A549 (cell line): ENCODE measurements at regions of chr10 and their contacts with region 1.

Region 1: GRCh38 chr10:43304687-43305340 is 37.9 kb upstream of the RASGEF1A start:
- DNase-seq: peak; percentile 43 to 46
- ATAC-seq: peak; percentile 80
- H3K4me3 ChIP-seq: peak overlapping the region; percentile 39
- H3K27ac ChIP-seq: peak overlapping the region; percentile 63 to 86
- H3K4me1 ChIP-seq: peaks cover 19% of the 10 kb centered on the region
- CTCF ChIP-seq: no peak
- EP300 ChIP-seq: no peak
- POLR2A ChIP-seq: no peak
- RAD21 ChIP-seq: no peak

Region 2: DNA sequence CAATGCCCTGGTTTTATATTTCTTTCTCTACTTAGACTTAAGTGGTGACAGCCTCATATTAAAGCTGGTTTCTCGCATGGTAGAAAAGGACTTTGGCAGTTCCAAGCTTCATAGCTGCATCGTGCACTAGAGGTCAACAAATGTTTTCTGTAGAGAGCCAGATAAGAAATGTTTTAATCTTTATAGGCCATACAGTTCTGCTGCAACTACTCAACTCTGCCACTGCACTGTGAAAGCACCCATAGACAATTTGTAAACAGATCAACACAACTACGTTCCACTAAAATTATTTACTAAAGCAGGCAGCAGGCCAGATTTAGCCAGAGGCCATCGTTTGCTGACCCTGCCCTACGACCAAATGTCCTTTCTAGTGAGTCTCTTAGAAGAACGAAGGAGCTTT is 129.8 kb before region 1 on chr10:
- CTCF ChIA-PET with region 1: no interaction called
- POLR2A ChIA-PET with region 1: no interaction called
- DNase-seq: no peak
- ATAC-seq: no peak
- H3K4me3 ChIP-seq: no peak overlapping the region
- H3K27ac ChIP-seq: no peak overlapping the region
- H3K4me1 ChIP-seq: no peaks in the 10 kb centered on the region
- CTCF ChIP-seq: no peak
- EP300 ChIP-seq: no peak
- POLR2A ChIP-seq: no peak
- RAD21 ChIP-seq: no peak

Region 3: DNA sequence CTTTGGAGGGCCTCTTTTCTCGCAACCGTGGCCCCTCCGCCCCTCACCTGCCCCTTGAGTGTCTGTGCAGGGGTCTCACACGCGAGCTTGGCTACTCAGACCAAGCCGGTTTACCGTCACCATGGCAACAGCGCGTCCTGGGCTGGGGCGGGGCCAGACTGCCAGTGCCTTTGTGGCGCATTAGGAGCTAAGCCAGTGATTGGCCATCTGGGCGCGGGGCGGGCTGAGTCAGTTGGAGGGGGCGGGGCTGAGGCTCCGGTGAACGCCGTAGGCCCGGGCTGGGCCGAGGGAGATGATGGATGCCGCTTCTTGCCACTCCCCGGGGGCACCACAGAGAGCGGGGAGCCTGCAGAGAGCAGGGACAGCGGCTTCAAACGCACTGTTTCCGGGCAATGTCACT is 18.0 kb after region 1 on chr10:
- CTCF ChIA-PET with region 1: interaction called, 10 read pairs
- POLR2A ChIA-PET with region 1: interaction called, 5 read pairs
- DNase-seq: peak; percentile 69 to 83
- ATAC-seq: peak; percentile 84 to 95
- H3K4me3 ChIP-seq: peak overlapping the region; percentile 42
- H3K27ac ChIP-seq: peak overlapping the region; percentile 60 to 79; a peak in 5 of 6 replicates
- H3K4me1 ChIP-seq: peaks cover 10% of the 10 kb centered on the region; the same call in 2 of the 3 replicates
- CTCF ChIP-seq: no peak
- EP300 ChIP-seq: no peak
- POLR2A ChIP-seq: peak; percentile 31; the same call in 1 of the 2 replicates
- RAD21 ChIP-seq: no peak